Activated T-helper 2 cell treated with anti-CD3 and anti-CD28 coated beads, Interferon-gamma antibody, Interleukin-2, Interleukin-4, amounts not matched to agents 10 μg/mL and 5 μg/mL and 100 μg/mL, durations not matched to agents 14 hours and 24 hours and 36 hours (primary cell): ENCODE measurements at regions of chr5 and their contacts with region 1.

Region 1: GRCh38 chr5:43389679-43390329 is 22.4 kb downstream of the CCL28 start:
- DNase-seq: peak; percentile 37
- H3K4me3 Mint-ChIP-seq: no peak overlapping the region
- H3K27ac Mint-ChIP-seq: no peak overlapping the region
- H3K4me1 Mint-ChIP-seq: peaks cover 20% of the 10 kb centered on the region
- H3K27me3 Mint-ChIP-seq: no peaks in the 10 kb centered on the region

Region 2: GRCh38 chr5:42908509-42909488 is 481.0 kb before region 1 on chr5:
- intact Hi-C with region 1: loop called (anchors 5 kb)
- DNase-seq: peak; percentile 86
- H3K4me3 Mint-ChIP-seq: peak overlapping the region; percentile 77
- H3K27ac Mint-ChIP-seq: peak overlapping the region; percentile 14
- H3K4me1 Mint-ChIP-seq: peaks cover 16% of the 10 kb centered on the region
- H3K27me3 Mint-ChIP-seq: peaks cover 31% of the 10 kb centered on the region

Region 3: GRCh38 chr5:43073597-43074546 is 315.9 kb before region 1 on chr5:
- intact Hi-C with region 1: loop called (anchors 2 kb)
- DNase-seq: peak; percentile 36
- H3K4me3 Mint-ChIP-seq: no peak overlapping the region
- H3K27ac Mint-ChIP-seq: peak overlapping the region; percentile 51
- H3K4me1 Mint-ChIP-seq: peaks cover 28% of the 10 kb centered on the region
- H3K27me3 Mint-ChIP-seq: no peaks in the 10 kb centered on the region

Region 4: GRCh38 chr5:43191740-43192557 is 197.9 kb before region 1 on chr5 and contains the start of gene NIM1K:
- intact Hi-C with region 1: loop called (anchors 10 kb)
- DNase-seq: peak; percentile 35
- H3K4me3 Mint-ChIP-seq: peak within 1 kb of the TSS; percentile 82
- H3K27ac Mint-ChIP-seq: peak within 1 kb of the TSS; percentile 59
- H3K4me1 Mint-ChIP-seq: peaks cover 24% of the 10 kb centered on the region
- H3K27me3 Mint-ChIP-seq: peaks cover 10% of the 10 kb centered on the region
- total RNA-seq, gene NIM1K: 0.76 and 1.1 TPM in 2 replicates

Region 5: GRCh38 chr5:43231977-43232376 is 157.8 kb before region 1 on chr5:
- intact Hi-C with region 1: loop called (anchors 5 kb)
- DNase-seq: no peak
- H3K4me3 Mint-ChIP-seq: no peak overlapping the region
- H3K27ac Mint-ChIP-seq: no peak overlapping the region
- H3K4me1 Mint-ChIP-seq: peaks cover 27% of the 10 kb centered on the region
- H3K27me3 Mint-ChIP-seq: no peaks in the 10 kb centered on the region

Region 6: GRCh38 chr5:43305948-43306565 is 83.7 kb before region 1 on chr5:
- intact Hi-C with region 1: loop called (anchors 2 kb)
- DNase-seq: no peak
- H3K4me3 Mint-ChIP-seq: peak overlapping the region; percentile 10
- H3K27ac Mint-ChIP-seq: peak overlapping the region; percentile 68
- H3K4me1 Mint-ChIP-seq: peaks cover 84% of the 10 kb centered on the region
- H3K27me3 Mint-ChIP-seq: no peaks in the 10 kb centered on the region